ENCODE measurements at regions of chr7 and their contacts with region 1.

Region 1: GRCh38 chr7:54299426-54299825 is 242.7 kb upstream of the VSTM2A start:
- DNase-seq: no peak
- H3K4me3 ChIP-seq: no peak overlapping the region
- H3K27ac ChIP-seq: no peak overlapping the region
- H3K4me1 ChIP-seq: no peaks in the 10 kb centered on the region
- H3K27me3 ChIP-seq: no peaks in the 10 kb centered on the region
- CTCF ChIP-seq: no peak
- EP300 ChIP-seq: no peak
- POLR2A ChIP-seq: no peak

Region 2: DNA sequence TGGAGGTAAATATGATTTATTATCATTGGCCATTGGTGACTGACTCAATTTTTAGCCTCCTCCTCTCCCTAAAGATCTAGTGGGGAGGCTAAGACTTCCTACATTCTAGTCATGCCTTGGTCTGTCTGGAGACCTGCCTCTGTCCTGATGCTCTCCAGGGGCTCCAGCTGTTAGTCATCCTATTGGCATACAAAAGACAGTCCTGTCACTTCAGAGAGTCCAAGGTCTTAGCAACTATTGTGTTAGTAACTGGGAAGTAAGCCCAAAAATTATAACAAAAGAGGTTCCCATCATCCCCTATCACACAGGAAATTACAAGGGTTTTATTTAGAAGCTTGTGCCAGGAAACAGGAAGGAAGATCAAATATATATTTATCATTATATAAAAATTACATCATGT is 157.8 kb before region 1 on chr7:
- intact Hi-C with region 1: no loop called
- DNase-seq: no peak
- H3K4me3 ChIP-seq: no peak overlapping the region
- H3K27ac ChIP-seq: no peak overlapping the region
- H3K4me1 ChIP-seq: no peaks in the 10 kb centered on the region
- H3K27me3 ChIP-seq: no peaks in the 10 kb centered on the region
- CTCF ChIP-seq: no peak
- EP300 ChIP-seq: no peak
- POLR2A ChIP-seq: no peak

Region 3: DNA sequence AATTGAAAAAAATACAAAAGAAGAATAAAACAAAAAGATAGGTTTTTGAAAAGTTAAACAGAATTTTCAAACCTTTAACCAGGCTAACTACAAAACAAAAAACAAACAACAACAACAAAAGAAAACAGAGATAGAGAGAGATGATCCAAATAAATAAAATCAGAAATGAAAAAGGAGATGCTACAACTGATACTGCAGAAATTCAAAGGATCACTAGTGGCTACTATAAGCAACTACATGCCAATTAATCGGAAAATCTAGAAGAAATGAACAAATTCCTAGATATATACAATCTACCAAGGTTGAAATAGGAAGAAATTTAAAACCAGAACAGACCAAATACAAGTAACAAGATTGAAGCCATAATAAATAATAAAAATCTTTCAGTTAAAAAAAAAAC is 84.0 kb before region 1 on chr7:
- intact Hi-C with region 1: loop called in 1 of 4 experiments (anchors 10 kb)
- DNase-seq: no peak
- H3K4me3 ChIP-seq: no peak overlapping the region
- H3K27ac ChIP-seq: no peak overlapping the region
- H3K4me1 ChIP-seq: no peaks in the 10 kb centered on the region
- H3K27me3 ChIP-seq: no peaks in the 10 kb centered on the region
- CTCF ChIP-seq: no peak
- EP300 ChIP-seq: no peak
- POLR2A ChIP-seq: no peak

Measured in ovary (tissue), 10 donors.